ENCODE measurements at regions of chr6 and their contacts with region 1.

Region 1: DNA sequence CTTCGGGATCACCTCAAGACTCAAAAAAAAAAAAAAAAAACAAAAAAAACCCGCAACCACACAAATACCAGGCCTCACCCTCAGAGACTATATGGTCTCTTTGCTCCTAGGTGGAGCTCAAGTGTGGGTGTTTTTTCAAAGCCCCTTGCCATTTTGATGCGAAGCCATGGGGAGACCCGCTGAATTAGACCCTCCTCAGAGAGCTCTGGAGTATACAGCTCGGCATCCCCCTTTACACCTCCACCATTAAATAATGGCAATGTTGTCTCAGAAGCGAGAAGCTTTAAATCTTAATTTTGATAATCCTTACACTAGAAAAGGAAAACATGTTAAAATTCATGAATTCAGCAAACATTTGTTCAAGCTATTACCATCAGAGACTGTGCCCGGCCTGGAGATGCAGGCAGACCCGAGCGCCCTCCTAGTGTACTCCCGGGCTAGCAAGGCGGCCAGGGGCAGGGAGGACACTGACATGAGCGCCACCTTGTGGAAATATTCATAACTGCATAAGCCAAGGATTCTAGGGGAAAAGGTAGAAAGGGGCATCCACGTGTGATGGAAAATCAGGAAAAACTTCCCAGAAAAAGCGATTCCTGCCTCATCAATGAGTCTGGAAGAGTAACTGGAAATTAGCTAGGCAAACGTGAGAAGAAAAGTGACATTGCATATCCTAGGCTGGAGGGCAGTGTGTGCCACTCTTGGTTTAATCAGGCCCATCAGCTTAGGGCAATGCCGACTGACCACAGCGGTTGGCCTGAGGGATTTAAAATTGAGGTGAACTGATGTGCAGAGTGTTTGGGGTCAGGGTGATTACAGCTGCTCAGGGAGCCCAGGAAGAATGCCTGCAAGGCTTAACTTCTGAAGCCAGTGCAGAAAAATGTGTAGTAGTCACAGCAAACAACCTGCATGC is 72.5 kb downstream of the B3GAT2 start:
- DNase-seq: peak; percentile 84
- H3K4me3 ChIP-seq: no peak overlapping the region
- H3K27ac ChIP-seq: no peak overlapping the region
- H3K4me1 ChIP-seq: no peaks in the 10 kb centered on the region
- H3K27me3 ChIP-seq: no peaks in the 10 kb centered on the region; the same call in 1 of the 2 replicates
- CTCF ChIP-seq: peak; percentile 92
- EP300 ChIP-seq: no peak
- RAD21 ChIP-seq: peak; percentile 93

Region 2: DNA sequence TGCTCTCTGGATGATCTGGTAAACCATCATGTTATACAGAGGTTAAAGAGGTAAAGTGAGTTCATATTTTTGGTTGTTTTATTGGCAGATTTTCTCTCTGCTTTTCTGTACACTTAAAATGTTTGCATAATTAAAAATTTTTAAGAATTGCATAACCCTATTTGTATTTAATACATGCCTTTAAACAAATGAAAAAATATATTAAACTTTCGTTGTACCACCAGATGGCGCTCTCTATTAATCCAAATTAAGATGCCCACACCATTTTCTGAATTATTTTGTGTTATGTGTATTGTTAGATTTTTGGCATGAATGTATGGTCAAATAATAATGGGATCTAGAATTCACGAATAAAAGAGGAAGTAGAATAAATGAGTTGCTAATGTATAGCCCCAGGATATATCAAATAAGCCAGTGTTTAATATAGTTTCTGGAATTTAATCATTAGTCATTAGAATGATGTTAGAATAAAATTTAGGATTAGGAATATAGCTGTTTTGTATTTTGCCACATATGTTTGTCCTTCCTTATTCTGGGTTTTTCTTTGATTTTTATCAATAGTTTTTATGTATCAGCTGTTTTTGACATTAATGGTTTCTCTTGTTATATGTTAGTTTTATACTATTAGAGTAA is 177.7 kb before region 1 on chr6:
- CTCF ChIA-PET with region 1: interaction called, 163 read pairs
- POLR2A ChIA-PET with region 1: no interaction called
- DNase-seq: peak; percentile 12
- H3K4me3 ChIP-seq: no peak overlapping the region
- H3K27ac ChIP-seq: no peak overlapping the region
- H3K4me1 ChIP-seq: no peaks in the 10 kb centered on the region
- H3K27me3 ChIP-seq: no peaks in the 10 kb centered on the region
- CTCF ChIP-seq: peak; percentile 87
- EP300 ChIP-seq: no peak
- RAD21 ChIP-seq: peak; percentile 80

Region 3: GRCh38 chr6:70846207-70846835 is 38.0 kb before region 1 on chr6:
- CTCF ChIA-PET with region 1: interaction called, 12 read pairs
- POLR2A ChIA-PET with region 1: no interaction called
- DNase-seq: no peak
- H3K4me3 ChIP-seq: no peak overlapping the region
- H3K27ac ChIP-seq: no peak overlapping the region
- H3K4me1 ChIP-seq: peaks cover 0 to 4% of the 10 kb centered on the region in 2 experiments; a peak in 2 of 4 replicates
- H3K27me3 ChIP-seq: no peaks in the 10 kb centered on the region
- CTCF ChIP-seq: no peak
- EP300 ChIP-seq: no peak
- RAD21 ChIP-seq: no peak

Region 4: DNA sequence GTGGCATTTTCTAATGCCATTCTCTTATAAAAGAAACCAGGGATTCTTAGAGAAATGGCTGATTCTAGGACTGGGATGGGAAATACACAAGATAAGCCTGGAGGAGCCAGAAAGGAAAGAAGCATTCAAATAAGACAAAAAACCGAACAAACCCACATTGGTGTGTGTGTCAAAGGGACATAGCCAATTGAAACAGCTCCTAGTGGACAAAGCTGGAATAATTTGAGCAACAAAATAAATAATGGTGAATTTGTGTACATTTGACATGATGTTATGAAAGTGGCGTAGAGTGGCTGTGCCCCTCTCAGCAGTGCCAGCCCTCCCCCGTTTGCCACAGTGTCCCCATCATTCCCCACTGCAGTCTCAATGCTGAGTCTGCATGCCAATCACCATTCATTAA is 17.0 kb after region 1 on chr6:
- CTCF ChIA-PET with region 1: interaction called, 26 read pairs
- POLR2A ChIA-PET with region 1: no interaction called
- DNase-seq: no peak
- H3K4me3 ChIP-seq: no peak overlapping the region
- H3K27ac ChIP-seq: no peak overlapping the region
- H3K4me1 ChIP-seq: no peaks in the 10 kb centered on the region
- H3K27me3 ChIP-seq: no peaks in the 10 kb centered on the region
- CTCF ChIP-seq: peak; percentile 49
- EP300 ChIP-seq: no peak
- RAD21 ChIP-seq: no peak

Region 5: GRCh38 chr6:71153755-71154325 is 269.5 kb after region 1 on chr6:
- CTCF ChIA-PET with region 1: no interaction called
- POLR2A ChIA-PET with region 1: no interaction called
- DNase-seq: no peak
- H3K4me3 ChIP-seq: no peak overlapping the region
- H3K27ac ChIP-seq: no peak overlapping the region
- H3K4me1 ChIP-seq: no peaks in the 10 kb centered on the region; a peak in 1 of 4 replicates
- H3K27me3 ChIP-seq: 0 out of 2 replicates have a peak, but pooled peaks cover 5% of the 10 kb centered on the region
- CTCF ChIP-seq: no peak
- EP300 ChIP-seq: no peak
- RAD21 ChIP-seq: no peak

Measured in SK-N-SH (cell line).